Activated CD8-positive, alpha-beta T cell treated with anti-CD3 and anti-CD28 coated beads, Interleukin-2, amount 10 ng/mL, durations not matched to agents 7 days and 5 days (primary cell): ENCODE measurements at regions of chr18 and their contacts with region 1.

Region 1: GRCh38 chr18:3604498-3605408 is 154.8 kb downstream of the TGIF1 start:
- DNase-seq: peak; percentile 52
- ATAC-seq: peak; percentile 71
- H3K4me3 Mint-ChIP-seq: no peak overlapping the region
- H3K27ac Mint-ChIP-seq: no peak overlapping the region
- H3K4me1 Mint-ChIP-seq: peaks cover 27% of the 10 kb centered on the region
- H3K27me3 Mint-ChIP-seq: no peaks in the 10 kb centered on the region

Region 2: GRCh38 chr18:3261371-3262246 is 343.1 kb before region 1 on chr18 and contains the start of gene MYL12B:
- CTCF ChIA-PET with region 1: interaction called, 4 read pairs
- POLR2A ChIA-PET with region 1: interaction called, 12 read pairs
- DNase-seq: peak; percentile 87
- ATAC-seq: peak; percentile 74
- H3K4me3 Mint-ChIP-seq: peak within 1 kb of the TSS; percentile 90
- H3K27ac Mint-ChIP-seq: peak within 1 kb of the TSS; percentile 100
- H3K4me1 Mint-ChIP-seq: peaks cover 78% of the 10 kb centered on the region
- H3K27me3 Mint-ChIP-seq: no peaks in the 10 kb centered on the region
- total RNA-seq, gene MYL12B: 402 to 404 TPM

Region 3: GRCh38 chr18:3566851-3567250 is 37.9 kb before region 1 on chr18:
- CTCF ChIA-PET with region 1: no interaction called
- POLR2A ChIA-PET with region 1: no interaction called
- DNase-seq: no peak
- ATAC-seq: no peak
- H3K4me3 Mint-ChIP-seq: no peak overlapping the region
- H3K27ac Mint-ChIP-seq: no peak overlapping the region
- H3K4me1 Mint-ChIP-seq: no peaks in the 10 kb centered on the region
- H3K27me3 Mint-ChIP-seq: no peaks in the 10 kb centered on the region